T-cell (primary cell): ENCODE measurements at regions of chr11 and their contacts with region 1.

Region 1: GRCh38 chr11:118689851-118690552 is 10.6 kb upstream of the TREH start:
- DNase-seq: peak; percentile 68 to 91 (median 83)
- ATAC-seq: peak; percentile 85 to 90 (median 88)
- H3K4me3 ChIP-seq: peak overlapping the region; percentile 45 to 71
- H3K4me3 Mint-ChIP-seq: peak overlapping the region; percentile 63 to 75 (median 64)
- H3K27ac ChIP-seq: peak overlapping the region; percentile 50
- H3K27ac Mint-ChIP-seq: peak overlapping the region; percentile 43 to 75
- H3K4me1 ChIP-seq: peaks cover 14 to 61% of the 10 kb centered on the region in 2 experiments
- H3K4me1 Mint-ChIP-seq: peaks cover 44 to 58% (median 55%) of the 10 kb centered on the region in 3 donors
- H3K27me3 ChIP-seq: peaks cover 0 to 16% of the 10 kb centered on the region in 2 experiments
- H3K27me3 Mint-ChIP-seq: peaks cover 0 to 2% of the 10 kb centered on the region in 2 donors

Region 2: DNA sequence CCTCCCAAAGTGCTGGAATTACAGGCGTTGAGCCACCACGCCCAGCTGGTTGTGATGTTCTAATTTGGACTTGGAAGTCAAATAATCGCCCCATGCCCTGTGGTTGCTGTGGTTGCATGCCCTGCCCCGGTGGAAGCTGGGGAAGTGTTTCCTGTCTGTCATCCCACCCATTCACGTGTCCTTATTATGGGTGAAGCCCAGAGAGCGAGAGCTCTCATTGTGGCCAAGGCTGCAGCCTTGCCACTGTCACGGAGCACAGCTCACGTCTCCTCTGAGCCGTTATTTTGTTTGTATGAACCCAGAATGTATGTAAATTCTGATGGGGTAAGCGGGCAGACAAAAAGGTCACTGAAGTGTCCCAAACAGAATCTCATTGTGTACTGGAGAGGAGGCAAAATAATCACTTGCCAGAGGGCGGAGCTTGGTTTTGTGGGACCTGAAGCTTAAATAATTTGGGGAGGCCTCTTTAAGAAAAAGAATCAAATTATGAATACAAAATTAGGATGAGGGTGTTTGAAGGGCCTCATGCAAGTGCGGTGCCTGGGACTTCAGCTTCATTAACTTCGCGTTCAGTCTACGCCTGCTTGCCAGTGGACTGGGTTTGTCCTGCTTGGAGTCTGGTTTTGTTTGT is 15.2 kb after region 1 on chr11:
- CTCF ChIA-PET with region 1: interaction called, 4 to 13 read pairs
- POLR2A ChIA-PET with region 1: no interaction called
- DNase-seq: peak in 34 of 35 experiments; percentile 20 to 72 (median 45)
- ATAC-seq: peak; percentile 82 to 96 (median 88)
- H3K4me3 ChIP-seq: no peak overlapping the region
- H3K4me3 Mint-ChIP-seq: peak overlapping the region; percentile 51 to 66 (median 60)
- H3K27ac ChIP-seq: peak overlapping the region; percentile 54
- H3K27ac Mint-ChIP-seq: peak overlapping the region; percentile 89 to 92
- H3K4me1 ChIP-seq: peaks cover 16 to 61% of the 10 kb centered on the region in 2 experiments
- H3K4me1 Mint-ChIP-seq: peaks cover 41 to 47% (median 42%) of the 10 kb centered on the region in 3 donors
- H3K27me3 ChIP-seq: peaks cover 0 to 1% of the 10 kb centered on the region in 2 experiments
- H3K27me3 Mint-ChIP-seq: no peaks in the 10 kb centered on the region

Region 3: GRCh38 chr11:118768690-118769089 is 78.7 kb after region 1 on chr11:
- CTCF ChIA-PET with region 1: interaction called in 1 of 2 experiments, 12 read pairs
- POLR2A ChIA-PET with region 1: no interaction called
- DNase-seq: no peak
- ATAC-seq: no peak
- H3K4me3 ChIP-seq: no peak overlapping the region
- H3K4me3 Mint-ChIP-seq: peak overlapping the region in 2 of 3 donors; percentile 2 to 22
- H3K27ac ChIP-seq: no peak overlapping the region
- H3K27ac Mint-ChIP-seq: peak overlapping the region; percentile 48 to 53
- H3K4me1 ChIP-seq: peaks cover 29 to 39% of the 10 kb centered on the region in 2 experiments
- H3K4me1 Mint-ChIP-seq: peaks cover 69 to 72% (median 71%) of the 10 kb centered on the region in 3 donors
- H3K27me3 ChIP-seq: no peaks in the 10 kb centered on the region
- H3K27me3 Mint-ChIP-seq: no peaks in the 10 kb centered on the region

Region 4: DNA sequence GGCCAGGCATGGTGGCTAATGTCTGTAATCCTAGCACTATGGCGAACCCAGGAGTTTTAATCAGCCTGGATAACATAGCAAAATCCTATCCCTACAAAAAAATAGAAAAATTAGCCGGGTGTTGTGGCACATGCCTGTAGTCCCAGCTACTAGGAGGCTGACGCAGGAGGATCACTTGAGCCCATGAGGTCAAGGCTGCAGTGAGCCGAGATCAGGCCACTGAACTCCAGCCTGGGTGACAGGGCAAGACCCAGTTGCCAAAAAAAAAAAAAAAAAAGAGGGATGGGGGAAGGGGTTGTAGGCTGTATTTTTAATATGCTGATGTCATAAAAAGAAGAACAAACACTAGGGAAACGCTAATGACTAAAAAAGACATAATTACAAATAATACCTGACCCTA is 88.9 kb after region 1 on chr11:
- CTCF ChIA-PET with region 1: no interaction called
- POLR2A ChIA-PET with region 1: interaction called in 1 of 2 experiments, 11 read pairs
- DNase-seq: no peak
- ATAC-seq: no peak
- H3K4me3 ChIP-seq: no peak overlapping the region
- H3K4me3 Mint-ChIP-seq: no peak overlapping the region
- H3K27ac ChIP-seq: no peak overlapping the region
- H3K27ac Mint-ChIP-seq: no peak overlapping the region
- H3K4me1 ChIP-seq: peaks cover 25 to 49% of the 10 kb centered on the region in 2 experiments
- H3K4me1 Mint-ChIP-seq: peaks cover 63 to 86% (median 79%) of the 10 kb centered on the region in 3 donors
- H3K27me3 ChIP-seq: no peaks in the 10 kb centered on the region
- H3K27me3 Mint-ChIP-seq: no peaks in the 10 kb centered on the region

Region 5: DNA sequence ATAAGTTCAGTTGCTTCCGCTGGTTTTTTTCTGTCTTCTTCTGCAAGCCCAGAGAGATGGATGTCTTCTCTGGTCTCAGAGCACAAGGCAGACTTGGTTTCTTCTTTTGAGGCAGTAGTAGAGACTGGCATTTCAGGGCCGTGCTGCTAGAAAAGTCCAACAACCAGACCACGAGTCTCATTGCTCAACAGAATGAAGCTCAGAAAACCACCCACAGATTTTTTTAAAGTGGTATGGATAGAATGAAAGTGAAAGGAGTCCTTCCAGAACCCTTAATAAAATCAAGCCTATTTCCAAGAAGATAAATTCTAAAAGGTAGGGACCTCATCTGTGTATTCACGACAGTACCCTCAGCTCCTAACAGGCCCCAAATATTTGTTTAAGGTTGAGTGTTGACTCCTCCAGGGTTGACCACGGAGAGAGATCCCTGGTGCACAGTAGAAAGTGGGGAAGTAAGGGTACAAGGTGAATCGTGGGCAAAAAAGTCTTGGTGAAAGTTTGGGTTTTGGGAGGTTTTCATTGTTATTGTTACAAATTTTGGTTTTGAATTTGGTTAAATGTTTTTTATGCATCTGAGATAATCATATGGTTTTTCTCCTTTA is 144.5 kb after region 1 on chr11:
- CTCF ChIA-PET with region 1: no interaction called
- POLR2A ChIA-PET with region 1: interaction called in 1 of 2 experiments, 11 read pairs
- DNase-seq: peak in 1 of 35 experiments; percentile 30
- ATAC-seq: peak in 1 of 4 experiments; percentile 53
- H3K4me3 ChIP-seq: no peak overlapping the region
- H3K4me3 Mint-ChIP-seq: peak overlapping the region; percentile 32 to 60 (median 50)
- H3K27ac ChIP-seq: peak overlapping the region; percentile 16
- H3K27ac Mint-ChIP-seq: peak overlapping the region; percentile 36 to 83
- H3K4me1 ChIP-seq: peaks cover 0 to under 1% of the 10 kb centered on the region in 2 experiments
- H3K4me1 Mint-ChIP-seq: peaks cover 14 to 21% (median 15%) of the 10 kb centered on the region in 3 donors
- H3K27me3 ChIP-seq: no peaks in the 10 kb centered on the region
- H3K27me3 Mint-ChIP-seq: no peaks in the 10 kb centered on the region

Region 6: GRCh38 chr11:119338318-119338907 is 648.4 kb after region 1 on chr11:
- CTCF ChIA-PET with region 1: interaction called in 1 of 2 experiments, 10 read pairs
- POLR2A ChIA-PET with region 1: no interaction called
- DNase-seq: peak in 34 of 35 experiments; percentile 22 to 84 (median 60)
- ATAC-seq: peak in 3 of 4 experiments; percentile 17 to 23 (median 23)
- H3K4me3 ChIP-seq: no peak overlapping the region
- H3K4me3 Mint-ChIP-seq: peak overlapping the region in 2 of 3 donors; percentile 26 to 65
- H3K27ac ChIP-seq: no peak overlapping the region
- H3K27ac Mint-ChIP-seq: no peak overlapping the region
- H3K4me1 ChIP-seq: peaks cover 14 to 58% of the 10 kb centered on the region in 2 experiments
- H3K4me1 Mint-ChIP-seq: peaks cover 38 to 50% (median 40%) of the 10 kb centered on the region in 3 donors
- H3K27me3 ChIP-seq: peaks cover 6 to 53% of the 10 kb centered on the region in 2 experiments
- H3K27me3 Mint-ChIP-seq: peaks cover 16 to 35% of the 10 kb centered on the region in 2 donors